ENCODE measurements at regions of chr7 and their contacts with region 1.

Region 1: GRCh38 chr7:24701261-24702235 is 55.7 kb downstream of the GSDME start:
- DNase-seq: peak; percentile 96
- ATAC-seq: peak; percentile 86
- H3K4me3 ChIP-seq: no peak overlapping the region
- H3K27ac ChIP-seq: peak overlapping the region; percentile 43; the same call in 1 of the 2 replicates
- H3K4me1 ChIP-seq: peaks cover 30% of the 10 kb centered on the region
- H3K27me3 ChIP-seq: no peaks in the 10 kb centered on the region
- CTCF ChIP-seq: no peak
- POLR2A ChIP-seq: no peak
- RAD21 ChIP-seq: no peak

Region 2: GRCh38 chr7:24757353-24758275 is 56.1 kb after region 1 on chr7 and contains the start of gene GSDME:
- CTCF ChIA-PET with region 1: no interaction called
- POLR2A ChIA-PET with region 1: no interaction called
- dilution Hi-C with region 1: no loop called
- in situ Hi-C with region 1: no loop called
- intact Hi-C with region 1: loop called (anchors 2 kb)
- DNase-seq: peak; percentile 51
- ATAC-seq: peak; percentile 94
- H3K4me3 ChIP-seq: peak within 1 kb of the TSS; percentile 76
- H3K27ac ChIP-seq: peak within 1 kb of the TSS; percentile 86
- H3K4me1 ChIP-seq: peaks cover 13% of the 10 kb centered on the region
- H3K27me3 ChIP-seq: no peaks in the 10 kb centered on the region
- CTCF ChIP-seq: 0 out of 2 replicates have a peak, but pooled peaks have one; percentile 10
- POLR2A ChIP-seq: no peak
- RAD21 ChIP-seq: no peak
- total RNA-seq, gene GSDME: 78.7 and 88.3 TPM in 2 replicates

Region 3: GRCh38 chr7:24800667-24801066 is 99.1 kb after region 1 on chr7:
- CTCF ChIA-PET with region 1: no interaction called
- POLR2A ChIA-PET with region 1: no interaction called
- dilution Hi-C with region 1: no loop called
- in situ Hi-C with region 1: no loop called
- intact Hi-C with region 1: loop called (anchors 10 kb)
- DNase-seq: no peak
- ATAC-seq: no peak
- H3K4me3 ChIP-seq: no peak overlapping the region
- H3K27ac ChIP-seq: no peak overlapping the region
- H3K4me1 ChIP-seq: peaks cover 4% of the 10 kb centered on the region; the same call in 1 of the 2 replicates
- H3K27me3 ChIP-seq: no peaks in the 10 kb centered on the region
- CTCF ChIP-seq: no peak
- POLR2A ChIP-seq: no peak
- RAD21 ChIP-seq: no peak

Region 4: GRCh38 chr7:24981184-24981951 is 279.8 kb after region 1 on chr7:
- CTCF ChIA-PET with region 1: no interaction called
- POLR2A ChIA-PET with region 1: no interaction called
- dilution Hi-C with region 1: no loop called
- in situ Hi-C with region 1: no loop called
- intact Hi-C with region 1: no loop called
- DNase-seq: peak; percentile 67
- ATAC-seq: peak; percentile 4; the same call in 1 of the 2 replicates
- H3K4me3 ChIP-seq: peak overlapping the region; percentile 65
- H3K27ac ChIP-seq: peak overlapping the region; percentile 53
- H3K4me1 ChIP-seq: peaks cover 6% of the 10 kb centered on the region
- H3K27me3 ChIP-seq: no peaks in the 10 kb centered on the region
- CTCF ChIP-seq: no peak
- POLR2A ChIP-seq: 0 out of 2 replicates have a peak, but pooled peaks have one; percentile 4
- RAD21 ChIP-seq: no peak

Region 5: DNA sequence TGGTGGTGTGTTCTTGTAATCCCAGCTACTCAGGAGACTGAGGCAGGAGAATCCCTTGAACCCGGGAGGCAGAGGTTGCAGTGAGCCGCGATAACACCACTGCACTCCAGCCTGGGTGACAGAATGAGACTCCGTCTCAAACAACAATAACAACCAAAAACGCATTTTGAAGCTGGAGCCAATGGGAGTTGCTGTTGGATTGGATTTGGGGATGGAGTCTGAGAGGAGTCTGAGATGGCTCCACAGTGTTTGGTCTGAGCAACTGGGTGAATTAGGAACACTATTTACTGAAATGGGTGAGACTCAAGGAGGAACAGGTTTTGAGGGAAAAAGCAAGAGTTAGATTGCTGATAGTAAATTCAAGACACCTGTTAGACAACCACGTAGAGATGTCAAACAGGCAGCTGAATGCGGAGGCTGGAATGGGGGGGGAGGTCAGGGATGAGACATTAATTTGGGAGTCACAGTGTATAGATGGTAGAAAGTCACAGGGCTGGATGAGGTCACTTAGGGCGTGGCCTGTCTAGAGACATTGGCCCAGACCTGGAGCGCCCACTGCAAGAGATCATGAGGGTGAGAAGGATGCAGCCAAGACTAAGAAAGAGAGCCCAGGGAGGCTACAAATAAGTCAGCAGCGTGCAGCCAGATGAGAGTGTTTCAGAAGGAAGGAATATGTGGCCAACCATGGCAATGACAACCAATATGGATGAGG is 367.1 kb after region 1 on chr7:
- CTCF ChIA-PET with region 1: no interaction called
- POLR2A ChIA-PET with region 1: no interaction called
- dilution Hi-C with region 1: no loop called
- in situ Hi-C with region 1: no loop called
- intact Hi-C with region 1: no loop called
- DNase-seq: no peak
- ATAC-seq: no peak
- H3K4me3 ChIP-seq: no peak overlapping the region
- H3K27ac ChIP-seq: no peak overlapping the region
- H3K4me1 ChIP-seq: peaks cover 4% of the 10 kb centered on the region; the same call in 1 of the 2 replicates
- H3K27me3 ChIP-seq: no peaks in the 10 kb centered on the region
- CTCF ChIP-seq: no peak
- POLR2A ChIP-seq: no peak
- RAD21 ChIP-seq: no peak